Heart left ventricle (tissue), 16 donors: ENCODE measurements at regions of chrX and their contacts with region 1.

Region 1: GRCh38 chrX:41781502-41781901 is 57.5 kb downstream of the GPR82 start:
- DNase-seq: no peak
- ATAC-seq: peak in 2 of 4 donors; percentile 39 to 62
- H3K4me3 ChIP-seq: no peak overlapping the region
- H3K27ac ChIP-seq: no peak overlapping the region
- H3K4me1 ChIP-seq: peaks cover 0 to 10% (median 0%) of the 10 kb centered on the region in 12 donors
- H3K27me3 ChIP-seq: peaks cover 0 to 4% (median 0%) of the 10 kb centered on the region in 9 donors
- CTCF ChIP-seq: peak; percentile 42 to 71 (median 55)
- POLR2A ChIP-seq: no peak

Region 2: DNA sequence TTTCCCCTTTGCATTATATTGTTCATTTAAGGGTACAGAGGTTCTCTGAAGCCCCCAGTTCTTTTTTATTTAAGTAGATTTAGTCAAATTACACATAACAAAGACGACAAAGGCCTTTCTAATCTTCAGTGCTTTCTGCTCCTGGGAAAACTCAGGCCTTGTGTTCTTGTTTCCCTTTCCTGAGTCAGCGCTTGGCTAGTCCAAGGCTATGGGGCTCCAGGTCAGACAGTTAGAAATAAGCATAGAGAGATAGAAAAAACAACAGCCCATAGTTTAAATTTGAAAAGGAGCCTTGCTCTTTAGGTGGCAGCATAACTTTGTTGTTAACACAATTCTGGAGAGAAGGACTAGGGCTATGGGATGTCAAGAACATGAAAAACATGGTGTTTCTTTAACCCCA is 899.2 kb after region 1 on chrX:
- intact Hi-C with region 1: loop called in 1 of 10 experiments (anchors 10 kb)
- DNase-seq: peak in 1 of 5 donors; percentile 6
- ATAC-seq: peak in 1 of 4 donors; percentile 31
- H3K4me3 ChIP-seq: no peak overlapping the region
- H3K27ac ChIP-seq: no peak overlapping the region
- H3K4me1 ChIP-seq: no peaks in the 10 kb centered on the region
- H3K27me3 ChIP-seq: peaks cover 0 to 9% (median 0%) of the 10 kb centered on the region in 9 donors
- CTCF ChIP-seq: no peak
- POLR2A ChIP-seq: no peak

Region 3: DNA sequence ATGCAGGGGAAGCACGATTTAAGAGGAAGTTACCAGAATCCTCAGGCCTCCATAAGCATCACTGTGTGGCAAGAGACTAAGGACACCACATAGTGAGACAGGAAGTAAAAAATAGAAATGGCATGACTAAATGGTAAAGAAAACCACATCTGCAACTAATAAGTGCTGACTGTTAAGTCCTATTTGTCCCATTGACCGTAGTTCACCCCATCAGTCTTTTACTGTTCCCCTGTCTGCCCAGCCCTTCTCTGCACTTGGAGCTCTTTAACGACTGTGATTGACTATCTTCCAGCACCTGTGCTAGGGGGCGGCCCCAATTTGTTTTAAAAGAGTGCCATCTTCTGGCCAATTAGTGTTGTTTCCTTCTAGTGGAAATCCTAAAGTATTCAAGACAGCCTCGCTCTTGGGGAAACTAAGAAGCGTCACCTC is 1968.8 kb after region 1 on chrX:
- intact Hi-C with region 1: loop called in 2 of 10 experiments (anchors 10 kb)
- DNase-seq: peak in 4 of 5 donors; percentile 36 to 44 (median 38)
- ATAC-seq: peak; percentile 79 to 88 (median 84)
- H3K4me3 ChIP-seq: no peak overlapping the region
- H3K27ac ChIP-seq: no peak overlapping the region
- H3K4me1 ChIP-seq: peaks cover 0 to 4% (median 0%) of the 10 kb centered on the region in 12 donors
- H3K27me3 ChIP-seq: peaks cover 0 to 9% (median 0%) of the 10 kb centered on the region in 9 donors
- CTCF ChIP-seq: peak; percentile 36 to 65 (median 58)
- POLR2A ChIP-seq: no peak